OCI-LY7 (cell line): ENCODE measurements at regions of chr2 and their contacts with region 1.

Region 1: GRCh38 chr2:149087751-149088150 is 49.3 kb downstream of the LYPD6B start:
- DNase-seq: peak; percentile 26
- H3K4me3 ChIP-seq: no peak overlapping the region
- H3K27ac ChIP-seq: no peak overlapping the region
- H3K4me1 ChIP-seq: no peaks in the 10 kb centered on the region
- CTCF ChIP-seq: peak; percentile 78

Region 2: GRCh38 chr2:149192427-149192826 is 104.7 kb after region 1 on chr2:
- CTCF ChIA-PET with region 1: no interaction called
- POLR2A ChIA-PET with region 1: no interaction called
- intact Hi-C with region 1: no loop called
- DNase-seq: no peak
- H3K4me3 ChIP-seq: no peak overlapping the region
- H3K27ac ChIP-seq: no peak overlapping the region
- H3K4me1 ChIP-seq: no peaks in the 10 kb centered on the region
- CTCF ChIP-seq: no peak

Region 3: DNA sequence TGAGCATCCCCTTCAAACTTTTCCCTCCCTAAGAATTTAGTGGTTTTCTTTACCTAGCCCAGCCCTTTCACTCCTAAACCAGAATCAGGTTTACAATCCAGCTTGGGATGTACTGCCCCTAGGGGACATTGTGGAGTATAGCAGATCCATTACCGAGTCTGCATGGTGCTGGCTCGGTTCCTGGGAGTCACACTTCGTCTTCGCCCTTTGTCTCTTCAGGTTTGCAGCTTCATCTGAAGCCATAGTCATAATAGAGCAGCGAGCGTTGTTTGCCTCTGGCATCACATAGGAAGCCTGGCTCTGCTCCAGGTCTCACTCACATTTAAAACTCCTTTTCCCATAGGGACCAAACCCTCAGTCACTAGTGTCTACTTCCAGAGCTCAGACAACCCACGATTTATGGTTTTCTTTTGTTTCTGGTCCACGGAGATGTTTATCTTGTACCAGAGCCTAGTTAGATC is 225.8 kb after region 1 on chr2:
- CTCF ChIA-PET with region 1: no interaction called
- POLR2A ChIA-PET with region 1: no interaction called
- intact Hi-C with region 1: loop called (anchors 2 kb)
- DNase-seq: peak; percentile 60
- H3K4me3 ChIP-seq: no peak overlapping the region
- H3K27ac ChIP-seq: no peak overlapping the region
- H3K4me1 ChIP-seq: no peaks in the 10 kb centered on the region
- CTCF ChIP-seq: peak; percentile 91